Posterior vena cava (tissue), 2 donors: ENCODE measurements at regions of chr15 and their contacts with region 1.

Region 1: DNA sequence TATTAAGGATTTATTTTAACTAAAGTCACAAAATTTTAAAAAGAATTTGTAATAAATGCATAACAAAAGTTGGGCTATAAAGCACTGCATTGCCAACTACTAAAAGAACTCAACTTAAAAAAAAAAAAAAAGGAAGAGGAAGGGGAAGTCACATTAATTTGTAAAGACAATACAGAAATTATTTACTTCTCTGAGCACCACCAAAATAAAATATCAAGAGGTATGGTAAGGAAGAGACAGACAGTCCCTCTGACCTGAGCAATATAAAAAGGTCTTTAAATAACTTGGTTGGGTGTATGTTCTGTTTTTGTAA is 83.5 kb downstream of the UACA start:
- DNase-seq: no peak

Region 2: GRCh38 chr15:70584838-70585706 is 94.8 kb before region 1 on chr15:
- intact Hi-C with region 1: no loop called
- DNase-seq: no peak

Region 3: DNA sequence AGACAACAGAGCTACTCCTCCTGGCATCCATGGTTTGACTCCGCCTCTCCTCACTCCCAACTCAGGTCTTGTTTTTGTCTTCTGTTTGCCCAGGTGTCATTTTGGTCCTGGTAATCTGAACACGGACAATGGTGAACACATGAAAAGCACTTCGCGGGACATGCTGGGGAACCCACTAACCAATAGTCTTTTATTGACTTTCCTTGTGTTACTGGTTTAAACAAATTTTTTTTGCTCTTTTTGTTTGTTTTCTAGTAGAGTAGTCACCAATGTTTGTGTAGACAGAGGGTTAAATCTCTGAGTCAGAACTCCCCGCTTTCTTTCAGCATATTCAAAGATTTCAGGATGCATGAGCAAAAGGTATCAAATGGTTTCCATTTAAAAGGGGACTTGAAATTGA is 135.8 kb after region 1 on chr15:
- intact Hi-C with region 1: loop called in 1 of 2 experiments (anchors 10 kb)
- DNase-seq: no peak